IMR-90 (cell line): ENCODE measurements at regions of chr15 and their contacts with region 1.

Region 1: DNA sequence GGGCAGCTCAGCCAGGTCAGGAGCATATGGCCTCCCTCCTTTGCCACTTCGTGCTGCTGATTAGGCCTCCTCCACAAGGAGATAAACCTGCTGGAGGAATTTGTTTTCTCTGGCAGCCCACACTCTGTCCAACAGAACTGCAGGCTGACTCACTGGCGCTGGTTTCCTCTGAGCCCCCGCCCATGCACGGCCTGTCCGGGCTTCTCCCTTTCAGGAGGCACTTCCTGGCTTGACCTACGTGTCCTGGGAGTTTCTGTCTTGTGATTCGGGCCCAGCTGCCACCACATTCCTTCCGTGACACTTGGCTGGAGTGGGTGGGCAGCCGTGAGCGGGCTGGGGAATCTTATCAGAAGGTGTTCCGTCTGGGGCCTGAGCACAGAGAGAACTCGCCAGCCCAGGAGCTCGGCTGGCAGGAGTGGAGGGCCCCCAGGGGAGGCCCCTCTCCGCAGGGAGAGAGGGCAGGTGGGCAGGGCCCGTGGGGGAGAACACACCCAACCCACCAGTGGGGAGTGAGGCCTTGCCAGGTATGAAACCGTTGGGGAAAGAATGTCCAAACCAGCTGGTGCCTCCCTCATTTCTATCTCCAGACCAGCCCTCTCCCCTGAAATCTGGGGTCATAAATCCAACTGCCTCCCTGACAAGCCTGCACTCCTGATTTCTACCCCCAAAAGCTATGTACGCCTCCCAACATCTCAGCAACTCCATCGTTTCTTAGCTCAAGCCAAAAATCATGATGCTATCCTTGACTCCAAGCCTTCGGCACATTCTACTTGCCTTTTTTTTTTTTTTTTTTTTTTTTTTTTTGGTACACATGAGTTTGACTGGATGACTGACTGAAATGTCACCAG is 110.6 kb upstream of the MEF2A start:
- DNase-seq: peak; percentile 98
- ATAC-seq: peak; percentile 98
- H3K4me3 ChIP-seq: no peak overlapping the region
- H3K27ac ChIP-seq: peak overlapping the region; percentile 88
- H3K4me1 ChIP-seq: peaks cover 33% of the 10 kb centered on the region
- H3K27me3 ChIP-seq: no peaks in the 10 kb centered on the region
- CTCF ChIP-seq: no peak
- POLR2A ChIP-seq: peak; percentile 64; the same call in 1 of the 2 replicates
- RAD21 ChIP-seq: peak; percentile 26

Region 2: DNA sequence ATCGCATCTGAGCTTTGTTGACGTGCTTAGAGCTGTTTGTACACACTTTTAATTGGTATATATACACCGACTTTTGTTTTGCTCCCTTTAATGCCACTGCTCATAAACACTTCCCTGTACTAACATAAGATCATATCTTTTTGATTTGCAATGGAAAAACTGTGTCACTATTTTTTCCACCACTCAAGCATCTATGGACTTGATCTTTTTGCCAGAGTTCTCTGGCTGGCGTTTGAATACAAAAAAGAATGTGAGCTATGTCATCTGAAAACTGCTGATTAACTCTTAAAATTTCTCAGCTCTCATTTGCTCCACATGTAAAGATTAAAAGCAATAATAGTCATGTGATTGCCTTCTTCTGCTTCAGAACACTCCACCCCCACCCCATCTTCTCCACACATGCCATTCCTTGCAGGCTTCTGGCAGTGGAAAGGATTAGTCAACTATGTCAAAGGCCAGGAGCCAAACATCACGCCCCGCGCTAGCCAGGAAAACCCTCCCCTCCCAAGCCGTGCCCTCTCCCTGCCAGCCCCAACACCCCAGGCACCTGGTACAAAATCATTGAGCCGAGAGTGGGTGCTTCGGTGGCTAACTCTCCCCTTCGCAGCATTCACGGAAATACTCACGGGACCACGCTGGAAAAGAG is 12.8 kb before region 1 on chr15:
- CTCF ChIA-PET with region 1: no interaction called
- POLR2A ChIA-PET with region 1: interaction called, 3 read pairs
- dilution Hi-C with region 1: no loop called
- in situ Hi-C with region 1: no loop called
- intact Hi-C with region 1: loop called (anchors 1 kb)
- DNase-seq: peak; percentile 90
- ATAC-seq: peak; percentile 89
- H3K4me3 ChIP-seq: no peak overlapping the region
- H3K27ac ChIP-seq: peak overlapping the region; percentile 88
- H3K4me1 ChIP-seq: peaks cover 14% of the 10 kb centered on the region
- H3K27me3 ChIP-seq: no peaks in the 10 kb centered on the region
- CTCF ChIP-seq: no peak
- POLR2A ChIP-seq: no peak
- RAD21 ChIP-seq: no peak

Region 3: GRCh38 chr15:99476413-99477222 is 21.5 kb after region 1 on chr15:
- CTCF ChIA-PET with region 1: no interaction called
- POLR2A ChIA-PET with region 1: no interaction called
- dilution Hi-C with region 1: no loop called
- in situ Hi-C with region 1: no loop called
- intact Hi-C with region 1: loop called (anchors 2 kb)
- DNase-seq: peak; percentile 100
- ATAC-seq: peak; percentile 92
- H3K4me3 ChIP-seq: peak overlapping the region; percentile 5; the same call in 1 of the 2 replicates
- H3K27ac ChIP-seq: peak overlapping the region; percentile 92
- H3K4me1 ChIP-seq: peaks cover 24% of the 10 kb centered on the region
- H3K27me3 ChIP-seq: no peaks in the 10 kb centered on the region
- CTCF ChIP-seq: no peak
- POLR2A ChIP-seq: peak; percentile 47; the same call in 1 of the 2 replicates
- RAD21 ChIP-seq: peak; percentile 36; the same call in 1 of the 2 replicates